Activated CD8-positive, alpha-beta T cell treated with anti-CD3 and anti-CD28 coated beads, Interleukin-2, amount 10 ng/mL, durations not matched to agents 7 days and 5 days (primary cell): ENCODE measurements at regions of chr4 and their contacts with region 1.

Region 1: DNA sequence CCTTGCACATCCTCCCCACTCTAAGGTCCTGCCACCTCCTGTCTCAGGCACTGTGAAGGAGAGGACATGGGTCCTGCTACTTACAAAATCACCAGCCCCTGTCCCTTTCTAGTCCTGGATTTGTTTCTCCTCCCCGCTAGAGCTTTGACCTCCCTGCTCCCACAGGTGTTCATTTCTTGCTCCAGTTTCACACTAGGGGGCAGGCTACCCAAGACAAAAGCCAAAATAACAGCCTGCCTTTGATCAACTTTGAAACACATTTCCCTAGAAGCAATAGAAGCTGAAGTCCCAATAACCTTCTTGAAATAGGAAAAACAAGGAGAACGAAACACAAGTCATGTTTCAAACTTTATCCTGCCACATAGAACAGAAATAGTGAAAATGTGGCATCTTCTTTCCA is 164.4 kb downstream of the QDPR start:
- DNase-seq: peak; percentile 50
- ATAC-seq: peak; percentile 64
- H3K4me3 Mint-ChIP-seq: no peak overlapping the region
- H3K27ac Mint-ChIP-seq: no peak overlapping the region
- H3K4me1 Mint-ChIP-seq: no peaks in the 10 kb centered on the region
- H3K27me3 Mint-ChIP-seq: peaks cover 5% of the 10 kb centered on the region

Region 2: DNA sequence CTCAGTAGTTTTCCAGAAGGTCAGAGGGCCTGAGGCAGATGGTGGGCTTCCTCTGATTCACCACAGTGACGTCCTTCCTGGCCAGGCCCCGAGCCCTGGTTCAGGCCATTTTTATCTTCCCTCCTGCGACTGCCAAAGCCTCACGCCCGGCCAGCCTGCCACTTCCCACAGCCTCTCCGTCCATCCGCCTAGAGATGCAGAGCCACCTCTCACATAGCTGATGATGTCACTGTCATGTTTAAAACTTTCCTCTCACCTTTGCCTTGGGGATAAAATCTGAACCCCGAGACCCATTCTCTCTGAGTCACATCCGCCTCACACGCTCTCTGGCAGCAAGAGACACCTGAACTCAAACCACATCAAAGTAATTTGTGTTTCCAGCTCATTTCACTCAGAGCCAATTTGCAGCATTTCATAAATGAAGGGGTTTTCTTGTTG is 10.9 kb before region 1 on chr4:
- CTCF ChIA-PET with region 1: interaction called, 20 read pairs
- POLR2A ChIA-PET with region 1: no interaction called
- DNase-seq: peak; percentile 87
- ATAC-seq: peak; percentile 99
- H3K4me3 Mint-ChIP-seq: peak overlapping the region; percentile 32
- H3K27ac Mint-ChIP-seq: peak overlapping the region; percentile 87
- H3K4me1 Mint-ChIP-seq: peaks cover 31% of the 10 kb centered on the region
- H3K27me3 Mint-ChIP-seq: no peaks in the 10 kb centered on the region

Region 3: DNA sequence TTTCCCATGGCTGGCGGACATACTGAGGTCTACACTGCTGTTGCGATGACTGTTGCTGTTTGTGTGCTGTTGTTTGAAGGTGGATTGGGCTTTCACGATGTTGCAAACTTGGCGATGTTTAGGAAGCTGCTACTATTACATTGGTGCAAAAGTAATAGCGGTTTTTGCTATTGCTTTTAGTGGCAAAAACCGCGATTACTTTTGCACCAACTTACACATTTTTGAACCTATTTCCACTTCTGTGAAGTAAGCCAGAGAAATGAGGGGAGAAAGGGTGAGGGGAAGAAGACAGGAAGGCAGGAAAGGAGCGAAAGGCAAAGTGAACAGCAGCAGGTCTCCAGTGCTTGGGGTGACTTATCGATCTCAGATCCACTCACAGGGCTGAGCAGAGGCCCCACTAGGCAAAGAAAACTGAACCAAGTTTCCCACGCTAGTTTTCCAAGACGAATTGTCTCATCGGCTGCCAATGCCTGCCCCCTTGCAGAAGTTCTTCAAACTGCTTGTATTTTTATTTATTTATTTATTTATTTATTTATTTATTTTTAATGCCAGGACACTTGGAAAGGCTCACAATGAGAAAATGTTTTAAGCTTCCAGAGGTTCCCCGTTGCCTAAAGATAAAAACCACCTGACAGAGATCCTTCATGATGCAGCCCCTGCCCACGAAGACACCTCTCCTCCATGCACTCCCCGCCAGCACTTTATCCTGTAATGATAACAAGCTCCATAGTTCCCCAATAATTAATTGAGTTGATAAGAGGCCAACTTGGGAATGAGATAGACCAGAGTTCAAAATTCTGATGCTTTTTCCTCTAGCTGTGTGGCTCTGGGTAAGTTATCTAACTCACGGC is 121.2 kb after region 1 on chr4:
- CTCF ChIA-PET with region 1: interaction called, 23 read pairs
- POLR2A ChIA-PET with region 1: no interaction called
- DNase-seq: no peak
- ATAC-seq: no peak
- H3K4me3 Mint-ChIP-seq: no peak overlapping the region
- H3K27ac Mint-ChIP-seq: no peak overlapping the region
- H3K4me1 Mint-ChIP-seq: no peaks in the 10 kb centered on the region
- H3K27me3 Mint-ChIP-seq: no peaks in the 10 kb centered on the region